Activated CD4-positive, alpha-beta T cell treated with anti-CD3 and anti-CD28 coated beads for 36 hours (primary cell): ENCODE measurements at regions of chr4 and their contacts with region 1.

Region 1: GRCh38 chr4:36394352-36394903 is 113.0 kb downstream of the DTHD1 start:
- DNase-seq: peak; percentile 60
- ATAC-seq: peak; percentile 94
- H3K4me3 Mint-ChIP-seq: peak overlapping the region; percentile 25
- H3K27ac Mint-ChIP-seq: peak overlapping the region; percentile 93
- H3K4me1 Mint-ChIP-seq: peaks cover 20% of the 10 kb centered on the region
- H3K27me3 Mint-ChIP-seq: no peaks in the 10 kb centered on the region

Region 2: DNA sequence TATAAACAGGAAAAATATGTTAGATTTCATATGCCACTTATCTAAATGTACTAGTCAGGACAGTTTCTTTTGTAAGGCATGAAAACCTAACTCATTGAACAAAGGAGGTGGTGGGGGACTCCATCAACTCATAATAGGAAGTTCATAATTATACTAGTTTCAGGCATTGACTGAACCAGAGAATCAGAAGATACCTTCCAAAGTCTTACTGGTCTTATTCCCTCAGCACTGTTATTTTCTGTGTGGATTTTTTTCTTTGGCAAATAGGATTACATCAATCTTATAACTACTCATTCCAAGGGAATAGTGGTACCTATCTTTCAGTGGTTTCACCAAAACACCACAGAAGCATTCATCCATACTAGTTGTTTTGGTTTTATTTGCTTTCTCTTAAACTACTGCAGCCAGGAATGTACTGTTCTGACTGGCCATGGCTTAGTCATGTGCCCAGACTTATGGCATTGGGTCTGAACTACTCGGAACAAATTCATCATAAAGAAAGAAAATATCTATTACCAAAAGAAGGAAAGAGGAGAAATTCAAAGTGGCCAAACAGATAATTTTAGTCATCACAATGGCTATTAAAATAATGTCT is 424.0 kb before region 1 on chr4:
- CTCF ChIA-PET with region 1: no interaction called
- POLR2A ChIA-PET with region 1: no interaction called
- intact Hi-C with region 1: loop called (anchors 1 kb)
- DNase-seq: peak; percentile 42
- ATAC-seq: peak; percentile 81
- H3K4me3 Mint-ChIP-seq: no peak overlapping the region
- H3K27ac Mint-ChIP-seq: no peak overlapping the region
- H3K4me1 Mint-ChIP-seq: peaks cover 10% of the 10 kb centered on the region
- H3K27me3 Mint-ChIP-seq: peaks cover 6% of the 10 kb centered on the region

Region 3: GRCh38 chr4:36081185-36081584 is 313.2 kb before region 1 on chr4:
- CTCF ChIA-PET with region 1: no interaction called
- POLR2A ChIA-PET with region 1: no interaction called
- intact Hi-C with region 1: loop called in 1 of 2 experiments (anchors 2 kb)
- DNase-seq: peak; percentile 29
- ATAC-seq: peak; percentile 97
- H3K4me3 Mint-ChIP-seq: no peak overlapping the region
- H3K27ac Mint-ChIP-seq: no peak overlapping the region
- H3K4me1 Mint-ChIP-seq: peaks cover 5% of the 10 kb centered on the region
- H3K27me3 Mint-ChIP-seq: no peaks in the 10 kb centered on the region

Region 4: DNA sequence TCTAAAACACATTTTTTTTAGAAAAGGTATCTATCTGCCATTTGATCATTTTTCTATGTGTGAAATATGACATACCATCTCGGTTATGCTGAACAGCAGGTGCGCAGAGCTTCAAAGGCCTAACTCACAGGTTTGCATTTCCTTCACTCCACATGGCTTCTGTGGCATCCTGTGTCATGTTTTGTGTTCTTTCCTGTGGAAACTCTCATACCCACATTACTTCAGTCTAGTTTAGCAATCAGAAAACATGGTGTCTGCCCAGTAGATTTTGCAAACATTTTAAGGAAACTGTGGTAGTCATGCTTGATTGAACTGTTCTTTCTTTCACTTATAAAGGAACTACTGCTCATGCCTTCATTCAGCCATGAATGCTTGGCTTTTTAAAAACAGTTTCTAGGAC is 138.9 kb before region 1 on chr4:
- CTCF ChIA-PET with region 1: interaction called, 13 read pairs
- POLR2A ChIA-PET with region 1: no interaction called
- intact Hi-C with region 1: loop called in 1 of 2 experiments (anchors 1 kb)
- DNase-seq: peak; percentile 73
- ATAC-seq: peak; percentile 87
- H3K4me3 Mint-ChIP-seq: peak overlapping the region; percentile 50
- H3K27ac Mint-ChIP-seq: peak overlapping the region; percentile 93
- H3K4me1 Mint-ChIP-seq: peaks cover 39% of the 10 kb centered on the region
- H3K27me3 Mint-ChIP-seq: no peaks in the 10 kb centered on the region

Region 5: GRCh38 chr4:36551697-36552214 is 157.3 kb after region 1 on chr4:
- CTCF ChIA-PET with region 1: no interaction called
- POLR2A ChIA-PET with region 1: no interaction called
- intact Hi-C with region 1: loop called in 1 of 2 experiments (anchors 5 kb)
- DNase-seq: peak; percentile 68
- ATAC-seq: peak; percentile 95
- H3K4me3 Mint-ChIP-seq: no peak overlapping the region
- H3K27ac Mint-ChIP-seq: peak overlapping the region; percentile 83
- H3K4me1 Mint-ChIP-seq: peaks cover 18% of the 10 kb centered on the region
- H3K27me3 Mint-ChIP-seq: peaks cover 8% of the 10 kb centered on the region

Region 6: GRCh38 chr4:37561803-37562207 is 1167.4 kb after region 1 on chr4:
- CTCF ChIA-PET with region 1: no interaction called
- POLR2A ChIA-PET with region 1: no interaction called
- intact Hi-C with region 1: no loop called
- DNase-seq: no peak
- ATAC-seq: no peak
- H3K4me3 Mint-ChIP-seq: no peak overlapping the region
- H3K27ac Mint-ChIP-seq: no peak overlapping the region
- H3K4me1 Mint-ChIP-seq: no peaks in the 10 kb centered on the region
- H3K27me3 Mint-ChIP-seq: no peaks in the 10 kb centered on the region